Activated CD4-positive, alpha-beta memory T cell treated with anti-CD3 and anti-CD28 coated beads for 36 hours (primary cell): ENCODE measurements at regions of chr1 and their contacts with region 1.

Region 1: DNA sequence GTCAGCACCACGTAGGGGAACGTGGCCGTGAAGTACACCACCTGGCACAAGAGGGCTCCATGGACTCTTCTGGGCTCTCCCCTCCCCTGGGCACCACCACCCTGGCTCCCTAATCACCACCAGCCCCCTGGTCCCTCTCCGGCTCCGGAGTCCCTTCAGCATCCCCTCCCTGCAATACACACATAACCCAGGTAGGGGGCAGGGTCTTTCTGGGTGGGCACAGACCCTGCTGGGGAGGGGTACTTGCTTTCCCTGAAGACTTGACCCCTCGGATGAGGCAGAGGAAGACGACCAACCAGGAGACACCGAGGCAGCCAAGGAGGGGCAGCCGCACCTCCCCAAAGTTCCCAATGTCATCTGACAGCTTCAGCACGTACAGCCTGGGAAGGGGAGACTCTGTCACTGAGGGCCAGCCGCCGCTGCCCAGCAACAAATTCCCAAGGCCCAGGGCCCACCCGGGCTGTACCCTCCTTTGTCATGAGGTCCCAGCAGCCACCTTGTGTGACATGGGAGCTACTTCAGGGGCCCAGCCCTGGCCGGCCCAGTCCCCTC is 11.3 kb downstream of the CCDC24 start:
- DNase-seq: no peak
- H3K4me3 Mint-ChIP-seq: no peak overlapping the region
- H3K27ac Mint-ChIP-seq: no peak overlapping the region
- H3K4me1 Mint-ChIP-seq: no peaks in the 10 kb centered on the region
- H3K27me3 Mint-ChIP-seq: no peaks in the 10 kb centered on the region

Region 2: GRCh38 chr1:44012941-44013609 is 10.4 kb after region 1 on chr1:
- CTCF ChIA-PET with region 1: interaction called, 18 read pairs
- POLR2A ChIA-PET with region 1: no interaction called
- intact Hi-C with region 1: no loop called
- DNase-seq: no peak
- H3K4me3 Mint-ChIP-seq: no peak overlapping the region
- H3K27ac Mint-ChIP-seq: no peak overlapping the region
- H3K4me1 Mint-ChIP-seq: no peaks in the 10 kb centered on the region
- H3K27me3 Mint-ChIP-seq: no peaks in the 10 kb centered on the region

Region 3: GRCh38 chr1:44029906-44030604 is 27.4 kb after region 1 on chr1:
- CTCF ChIA-PET with region 1: interaction called, 123 read pairs
- POLR2A ChIA-PET with region 1: interaction called, 4 read pairs
- intact Hi-C with region 1: no loop called
- DNase-seq: peak; percentile 92
- H3K4me3 Mint-ChIP-seq: peak overlapping the region; percentile 94
- H3K27ac Mint-ChIP-seq: peak overlapping the region; percentile 95
- H3K4me1 Mint-ChIP-seq: peaks cover 13% of the 10 kb centered on the region
- H3K27me3 Mint-ChIP-seq: no peaks in the 10 kb centered on the region

Region 4: GRCh38 chr1:44044071-44044801 is 41.6 kb after region 1 on chr1:
- CTCF ChIA-PET with region 1: interaction called, 95 read pairs
- POLR2A ChIA-PET with region 1: no interaction called
- intact Hi-C with region 1: no loop called
- DNase-seq: no peak
- H3K4me3 Mint-ChIP-seq: no peak overlapping the region
- H3K27ac Mint-ChIP-seq: no peak overlapping the region
- H3K4me1 Mint-ChIP-seq: peaks cover 18% of the 10 kb centered on the region
- H3K27me3 Mint-ChIP-seq: peaks cover 7% of the 10 kb centered on the region

Region 5: GRCh38 chr1:44631647-44632539 is 629.2 kb after region 1 on chr1:
- CTCF ChIA-PET with region 1: no interaction called
- POLR2A ChIA-PET with region 1: no interaction called
- intact Hi-C with region 1: no loop called
- DNase-seq: peak; percentile 94
- H3K4me3 Mint-ChIP-seq: peak overlapping the region; percentile 91
- H3K27ac Mint-ChIP-seq: peak overlapping the region; percentile 94
- H3K4me1 Mint-ChIP-seq: peaks cover 36% of the 10 kb centered on the region
- H3K27me3 Mint-ChIP-seq: no peaks in the 10 kb centered on the region